Activated B cell treated with CpG ODN at 0.5 μM for 24 hours (primary cell): ENCODE measurements at regions of chr15 and their contacts with region 1.

Region 1: DNA sequence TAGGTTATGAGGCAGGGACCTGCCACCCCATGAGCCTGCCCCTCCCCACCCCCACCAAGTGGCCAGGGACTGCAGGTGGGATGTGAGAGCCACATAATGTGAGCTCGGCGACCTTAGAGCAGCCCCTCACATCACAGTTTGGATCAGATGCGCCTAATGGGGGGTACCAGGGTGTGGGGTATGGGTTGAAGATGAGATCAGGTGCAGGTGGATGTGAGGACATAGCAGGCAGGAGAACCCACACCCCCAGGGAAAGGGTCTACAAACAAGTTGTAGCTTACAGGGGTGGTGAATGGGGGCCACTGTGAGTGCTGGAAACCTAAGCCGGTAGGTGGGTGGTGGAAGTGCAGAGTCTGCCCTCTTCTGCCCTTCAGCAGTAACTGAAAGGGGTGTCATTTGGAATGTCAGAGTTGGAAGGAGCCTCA is 94.0 kb downstream of the CORO2B start:
- DNase-seq: no peak
- ATAC-seq: no peak
- H3K4me3 Mint-ChIP-seq: no peak overlapping the region
- H3K27ac Mint-ChIP-seq: no peak overlapping the region
- H3K4me1 Mint-ChIP-seq: peaks cover 15% of the 10 kb centered on the region
- H3K27me3 Mint-ChIP-seq: peaks cover 11% of the 10 kb centered on the region
- CTCF ChIP-seq: no peak

Region 2: GRCh38 chr15:68550481-68551295 is 122.1 kb before region 1 on chr15:
- CTCF ChIA-PET with region 1: interaction called, 97 read pairs
- POLR2A ChIA-PET with region 1: no interaction called
- intact Hi-C with region 1: loop called (anchors 1 kb)
- DNase-seq: peak; percentile 68
- ATAC-seq: peak; percentile 67
- H3K4me3 Mint-ChIP-seq: no peak overlapping the region
- H3K27ac Mint-ChIP-seq: no peak overlapping the region
- H3K4me1 Mint-ChIP-seq: no peaks in the 10 kb centered on the region
- H3K27me3 Mint-ChIP-seq: peaks cover 22% of the 10 kb centered on the region
- CTCF ChIP-seq: peak; percentile 65

Region 3: GRCh38 chr15:68578174-68578979 is 94.4 kb before region 1 on chr15:
- CTCF ChIA-PET with region 1: interaction called, 8 read pairs
- POLR2A ChIA-PET with region 1: interaction called, 4 read pairs
- intact Hi-C with region 1: loop called (anchors 1 kb)
- DNase-seq: peak; percentile 57
- ATAC-seq: peak; percentile 69
- H3K4me3 Mint-ChIP-seq: peak overlapping the region; percentile 83
- H3K27ac Mint-ChIP-seq: peak overlapping the region; percentile 71
- H3K4me1 Mint-ChIP-seq: peaks cover 38% of the 10 kb centered on the region
- H3K27me3 Mint-ChIP-seq: peaks cover 17% of the 10 kb centered on the region
- CTCF ChIP-seq: no peak

Region 4: GRCh38 chr15:68650901-68651709 is 21.7 kb before region 1 on chr15:
- CTCF ChIA-PET with region 1: interaction called, 17 read pairs
- POLR2A ChIA-PET with region 1: no interaction called
- intact Hi-C with region 1: no loop called
- DNase-seq: peak; percentile 46
- ATAC-seq: peak; percentile 67
- H3K4me3 Mint-ChIP-seq: no peak overlapping the region
- H3K27ac Mint-ChIP-seq: no peak overlapping the region
- H3K4me1 Mint-ChIP-seq: peaks cover 2% of the 10 kb centered on the region
- H3K27me3 Mint-ChIP-seq: no peaks in the 10 kb centered on the region
- CTCF ChIP-seq: no peak

Region 5: GRCh38 chr15:68712886-68713285 is 40.1 kb after region 1 on chr15:
- CTCF ChIA-PET with region 1: no interaction called
- POLR2A ChIA-PET with region 1: no interaction called
- intact Hi-C with region 1: no loop called
- DNase-seq: no peak
- ATAC-seq: no peak
- H3K4me3 Mint-ChIP-seq: no peak overlapping the region
- H3K27ac Mint-ChIP-seq: no peak overlapping the region
- H3K4me1 Mint-ChIP-seq: peaks cover 7% of the 10 kb centered on the region
- H3K27me3 Mint-ChIP-seq: peaks cover 7% of the 10 kb centered on the region
- CTCF ChIP-seq: no peak

Region 6: DNA sequence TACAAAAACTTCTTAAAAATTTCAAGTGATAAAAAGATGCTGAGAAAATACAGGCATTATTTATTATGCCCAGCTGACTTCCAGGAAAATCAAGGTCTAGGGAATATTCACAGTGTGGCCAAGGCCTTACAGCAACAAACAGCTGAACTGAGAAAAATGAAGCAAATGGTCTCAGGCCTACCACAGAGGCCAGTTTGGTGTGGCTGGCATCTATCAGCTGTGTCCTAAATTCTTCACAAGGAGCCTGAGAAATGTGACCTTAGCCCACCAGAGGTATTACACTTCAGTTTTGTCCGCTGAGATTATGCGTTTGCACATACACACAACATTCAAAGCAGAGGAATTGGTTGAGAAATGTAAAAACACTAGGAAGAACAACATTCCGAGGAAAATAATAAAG is 70.5 kb after region 1 on chr15:
- CTCF ChIA-PET with region 1: no interaction called
- POLR2A ChIA-PET with region 1: no interaction called
- intact Hi-C with region 1: no loop called
- DNase-seq: no peak
- ATAC-seq: no peak
- H3K4me3 Mint-ChIP-seq: no peak overlapping the region
- H3K27ac Mint-ChIP-seq: no peak overlapping the region
- H3K4me1 Mint-ChIP-seq: no peaks in the 10 kb centered on the region
- H3K27me3 Mint-ChIP-seq: peaks cover 8% of the 10 kb centered on the region
- CTCF ChIP-seq: no peak